ENCODE measurements at regions of chr2 and their contacts with region 1.

Region 1: DNA sequence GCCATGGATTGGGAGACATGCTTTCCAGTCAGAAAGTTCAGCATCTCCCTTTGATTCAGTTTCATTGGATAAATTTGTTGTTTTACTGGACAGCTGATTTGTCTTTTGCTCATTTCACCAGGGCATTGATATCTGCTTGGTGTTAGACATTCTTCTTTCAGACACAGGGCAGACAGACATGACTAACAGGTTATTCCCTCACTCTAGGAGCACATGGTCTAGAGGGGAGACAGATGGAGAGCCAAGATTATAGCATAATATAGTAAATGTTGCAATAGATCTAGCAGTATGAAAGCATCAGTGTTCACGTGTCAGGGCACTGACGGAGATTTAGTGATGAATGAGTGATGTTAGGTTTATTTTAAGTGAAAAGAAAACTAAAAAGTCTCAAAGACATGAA is 187.0 kb upstream of the CYRIA start:
- DNase-seq: no peak
- ATAC-seq: no peak
- H3K4me3 ChIP-seq: no peak overlapping the region
- H3K27ac ChIP-seq: no peak overlapping the region
- H3K4me1 ChIP-seq: no peaks in the 10 kb centered on the region
- H3K27me3 ChIP-seq: peaks cover 0 to 8% (median 0%) of the 10 kb centered on the region in 9 donors
- CTCF ChIP-seq: no peak
- POLR2A ChIP-seq: no peak

Region 2: DNA sequence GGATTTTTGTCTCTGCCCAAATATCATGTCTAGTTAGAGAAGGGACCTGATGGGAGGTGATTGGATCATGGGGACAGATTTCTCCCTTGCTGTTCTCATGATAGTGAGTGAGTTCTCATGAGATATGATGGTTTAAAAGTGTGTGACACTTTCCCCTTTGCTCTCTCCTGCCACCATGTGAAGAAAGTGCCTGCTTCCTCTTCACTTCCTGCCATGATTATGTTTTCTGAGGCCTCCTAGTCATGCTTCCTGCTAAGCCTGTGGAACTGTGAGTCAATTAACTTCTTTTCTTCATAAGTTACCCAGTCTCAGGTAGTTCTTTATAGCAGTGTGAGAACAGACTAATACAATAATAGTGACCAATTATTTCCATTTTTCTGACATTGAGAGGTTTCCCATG is 19.7 kb before region 1 on chr2:
- intact Hi-C with region 1: loop called in 1 of 10 experiments (anchors 2 kb)
- DNase-seq: no peak
- ATAC-seq: no peak
- H3K4me3 ChIP-seq: no peak overlapping the region
- H3K27ac ChIP-seq: no peak overlapping the region
- H3K4me1 ChIP-seq: no peaks in the 10 kb centered on the region
- H3K27me3 ChIP-seq: no peaks in the 10 kb centered on the region
- CTCF ChIP-seq: no peak
- POLR2A ChIP-seq: no peak